ENCODE measurements at regions of chr15 and their contacts with region 1.

Region 1: DNA sequence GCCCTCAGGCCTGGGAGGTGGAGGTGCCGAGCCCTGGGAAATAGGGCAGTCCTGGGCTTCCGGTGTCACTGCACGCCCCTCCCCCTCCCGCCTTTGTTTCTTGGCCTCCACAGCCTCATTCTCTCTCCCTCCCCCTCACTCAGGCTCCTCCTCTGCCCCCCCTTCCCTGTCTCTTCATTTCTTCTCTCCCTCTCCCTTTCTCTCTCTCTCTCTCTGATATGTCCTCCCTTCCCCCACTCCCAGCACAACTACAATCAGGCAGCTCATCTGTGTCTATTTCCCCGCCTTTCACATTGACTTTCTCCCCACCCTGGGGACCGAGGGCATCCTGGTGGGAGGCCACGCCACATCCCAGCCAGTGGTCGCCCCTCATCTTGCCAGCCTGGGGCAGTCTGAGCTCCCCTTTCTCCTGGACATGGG is 40.2 kb downstream of the IDH2 start:
- DNase-seq: no peak

Region 2: DNA sequence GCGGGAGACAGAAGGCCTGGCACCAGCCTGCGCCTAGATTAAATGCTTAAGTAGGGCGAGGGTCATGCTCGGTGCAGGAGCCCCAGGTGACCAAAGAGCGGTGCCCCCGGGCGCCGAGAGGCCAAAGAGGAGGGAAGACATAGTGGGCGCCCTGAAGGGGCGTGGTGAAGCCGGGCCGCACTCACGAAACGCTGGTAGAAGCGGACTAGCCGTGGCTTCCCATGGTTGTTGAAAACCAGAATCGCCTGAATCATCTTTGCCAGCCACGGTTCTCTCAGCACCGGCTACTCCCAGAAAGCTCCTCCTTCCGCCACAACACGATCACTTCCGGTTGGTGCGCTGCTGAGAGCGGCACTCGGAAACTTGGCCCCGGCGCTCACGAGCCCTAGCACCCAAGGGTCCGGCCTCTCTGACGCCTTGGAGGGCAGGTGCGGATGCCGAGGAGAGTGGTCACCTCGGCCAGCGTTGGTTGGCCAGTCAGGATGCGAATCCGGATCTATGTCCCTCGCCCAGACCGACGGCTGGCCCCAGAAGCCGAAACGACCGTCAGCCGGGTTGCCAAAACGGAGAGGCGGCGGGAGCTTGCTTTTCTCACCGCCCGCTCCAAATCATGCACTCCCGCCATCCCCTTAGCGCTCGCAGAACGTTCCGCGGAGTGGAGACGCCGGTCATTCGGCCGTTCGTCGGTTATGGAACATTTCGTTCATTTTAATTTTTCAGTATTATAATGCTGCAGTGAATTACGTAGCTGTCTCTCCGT is 168.2 kb before region 1 on chr15 and contains the start of gene AP3S2:
- intact Hi-C with region 1: loop called (anchors 5 kb)
- DNase-seq: peak; percentile 95
- total RNA-seq, gene AP3S2: 33.6 TPM

Region 3: GRCh38 chr15:90035095-90035827 is 26.8 kb before region 1 on chr15:
- intact Hi-C with region 1: loop called (anchors 2 kb)
- DNase-seq: peak; percentile 77

Region 4: DNA sequence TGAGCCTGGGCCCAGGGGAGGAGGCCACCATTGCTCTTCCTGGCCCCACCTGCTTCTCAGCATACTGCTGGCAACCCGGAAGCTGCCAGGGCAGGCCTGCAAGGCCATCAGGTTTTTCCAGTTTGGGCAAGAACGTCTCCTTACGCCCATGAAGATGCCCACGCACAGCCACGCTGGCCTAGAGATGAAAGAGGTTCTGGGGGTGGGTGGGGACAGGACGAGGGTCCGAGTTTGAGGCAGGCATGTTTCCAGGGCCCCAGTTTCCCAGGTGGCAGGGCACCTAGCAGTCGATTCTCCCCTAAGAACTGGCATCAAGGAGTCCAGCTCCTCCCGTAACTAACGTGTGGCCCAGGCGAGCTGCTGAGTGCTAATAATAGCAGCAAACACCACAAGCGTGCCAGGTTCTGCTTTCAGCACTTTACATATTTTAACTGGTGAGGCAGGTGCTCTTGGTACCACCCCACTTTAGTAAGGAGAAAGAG is 15.1 kb before region 1 on chr15:
- intact Hi-C with region 1: no loop called
- DNase-seq: peak; percentile 74

Measured in cardiac septum (tissue), 1 donor.